ENCODE measurements at regions of chr21 and their contacts with region 1.

Region 1: DNA sequence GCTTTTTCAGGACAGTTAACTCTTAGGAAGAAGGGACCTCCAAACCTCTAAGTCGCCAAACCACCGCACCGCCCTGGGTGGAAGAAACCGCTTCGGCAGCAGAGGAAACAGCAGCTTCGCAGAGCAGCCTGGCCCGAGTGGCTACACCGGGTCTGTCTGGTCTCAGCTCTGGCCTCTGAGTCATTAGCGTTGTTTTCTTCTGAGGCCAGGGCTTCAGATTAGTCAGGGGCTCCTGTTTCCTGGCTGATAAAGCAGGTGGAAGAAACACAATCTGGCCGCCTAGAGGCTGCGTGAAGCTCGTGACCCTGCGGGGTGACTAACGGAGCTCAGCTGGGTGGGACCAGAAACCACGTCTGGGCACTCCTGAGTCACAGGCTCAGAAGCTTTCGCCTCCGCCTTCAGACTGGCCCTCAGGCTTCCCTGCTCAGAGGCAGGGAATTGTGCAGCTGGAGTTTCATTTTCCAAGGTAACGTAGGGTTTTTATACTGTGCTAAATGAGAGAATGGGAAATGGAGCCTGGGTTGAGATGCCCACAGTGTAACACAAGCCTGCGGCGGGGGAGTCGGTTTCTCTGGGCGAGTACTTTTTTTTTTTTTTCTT is 44.9 kb downstream of the CHAF1B start:
- DNase-seq: peak; percentile 90

Region 2: GRCh38 chr21:36504067-36505058 is 74.3 kb after region 1 on chr21:
- intact Hi-C with region 1: loop called (anchors 10 kb)
- DNase-seq: no peak